Endothelial cell of umbilical vein (primary cell): ENCODE measurements at regions of chr15 and their contacts with region 1.

Region 1: GRCh38 chr15:35427091-35427490 is 118.9 kb downstream of the DPH6 start:
- DNase-seq: peak; percentile 90
- H3K4me3 ChIP-seq: no peak overlapping the region
- H3K27ac ChIP-seq: no peak overlapping the region
- H3K4me1 ChIP-seq: peaks cover 13% of the 10 kb centered on the region
- H3K27me3 ChIP-seq: no peaks in the 10 kb centered on the region
- CTCF ChIP-seq: no peak
- POLR2A ChIP-seq: no peak

Region 2: GRCh38 chr15:35437157-35437556 is 10.1 kb after region 1 on chr15:
- CTCF ChIA-PET with region 1: interaction called, 13 read pairs
- POLR2A ChIA-PET with region 1: no interaction called
- dilution Hi-C with region 1: no loop called
- intact Hi-C with region 1: no loop called
- DNase-seq: peak; percentile 16
- H3K4me3 ChIP-seq: no peak overlapping the region
- H3K27ac ChIP-seq: no peak overlapping the region
- H3K4me1 ChIP-seq: no peaks in the 10 kb centered on the region
- H3K27me3 ChIP-seq: no peaks in the 10 kb centered on the region
- CTCF ChIP-seq: peak in 1 of 2 donors; percentile 13
- POLR2A ChIP-seq: no peak